Spleen (tissue), 13 donors: ENCODE measurements at regions of chr10 and their contacts with region 1.

Region 1: GRCh38 chr10:110803830-110804338 is 67.8 kb upstream of the PDCD4 start:
- DNase-seq: peak; percentile 79
- H3K4me3 ChIP-seq: peak overlapping the region in 1 of 8 donors; percentile 4
- H3K27ac ChIP-seq: peak overlapping the region in 4 of 8 donors; percentile 10 to 65 (median 56)
- H3K4me1 ChIP-seq: peaks cover 13 to 33% (median 25%) of the 10 kb centered on the region in 6 donors
- H3K27me3 ChIP-seq: no peaks in the 10 kb centered on the region
- CTCF ChIP-seq: peak; percentile 38 to 78 (median 71)
- POLR2A ChIP-seq: no peak

Region 2: GRCh38 chr10:110446954-110447608 is 356.8 kb before region 1 on chr10:
- intact Hi-C with region 1: no loop called
- DNase-seq: peak; percentile 63
- H3K4me3 ChIP-seq: no peak overlapping the region
- H3K27ac ChIP-seq: peak overlapping the region in 1 of 8 donors; percentile 31
- H3K4me1 ChIP-seq: peaks cover 0 to 19% (median under 1%) of the 10 kb centered on the region in 6 donors
- H3K27me3 ChIP-seq: no peaks in the 10 kb centered on the region
- CTCF ChIP-seq: no peak
- POLR2A ChIP-seq: no peak

Region 3: GRCh38 chr10:110860576-110861241 is 56.8 kb after region 1 on chr10:
- intact Hi-C with region 1: no loop called
- DNase-seq: peak; percentile 86
- H3K4me3 ChIP-seq: peak overlapping the region in 1 of 8 donors; percentile 43
- H3K27ac ChIP-seq: peak overlapping the region; percentile 82 to 100 (median 99)
- H3K4me1 ChIP-seq: peaks cover 78 to 87% (median 86%) of the 10 kb centered on the region in 6 donors
- H3K27me3 ChIP-seq: no peaks in the 10 kb centered on the region
- CTCF ChIP-seq: no peak
- POLR2A ChIP-seq: no peak

Region 4: GRCh38 chr10:110871298-110872084 is 67.6 kb after region 1 on chr10 and contains the start of gene PDCD4:
- intact Hi-C with region 1: loop called (anchors 5 kb)
- DNase-seq: peak; percentile 98
- H3K4me3 ChIP-seq: peak within 1 kb of the TSS; percentile 78 to 96 (median 90)
- H3K27ac ChIP-seq: peak within 1 kb of the TSS; percentile 96 to 100 (median 99)
- H3K4me1 ChIP-seq: peaks cover 54 to 88% (median 78%) of the 10 kb centered on the region in 6 donors
- H3K27me3 ChIP-seq: no peaks in the 10 kb centered on the region
- CTCF ChIP-seq: peak in 1 of 11 experiments; percentile 7
- POLR2A ChIP-seq: peak; percentile 14 to 90 (median 83)
- total RNA-seq, gene PDCD4: 128 to 201 (median 146) TPM